Left ventricle myocardium superior (tissue), 1 donor: ENCODE measurements at regions of chr1 and their contacts with region 1.

Region 1: DNA sequence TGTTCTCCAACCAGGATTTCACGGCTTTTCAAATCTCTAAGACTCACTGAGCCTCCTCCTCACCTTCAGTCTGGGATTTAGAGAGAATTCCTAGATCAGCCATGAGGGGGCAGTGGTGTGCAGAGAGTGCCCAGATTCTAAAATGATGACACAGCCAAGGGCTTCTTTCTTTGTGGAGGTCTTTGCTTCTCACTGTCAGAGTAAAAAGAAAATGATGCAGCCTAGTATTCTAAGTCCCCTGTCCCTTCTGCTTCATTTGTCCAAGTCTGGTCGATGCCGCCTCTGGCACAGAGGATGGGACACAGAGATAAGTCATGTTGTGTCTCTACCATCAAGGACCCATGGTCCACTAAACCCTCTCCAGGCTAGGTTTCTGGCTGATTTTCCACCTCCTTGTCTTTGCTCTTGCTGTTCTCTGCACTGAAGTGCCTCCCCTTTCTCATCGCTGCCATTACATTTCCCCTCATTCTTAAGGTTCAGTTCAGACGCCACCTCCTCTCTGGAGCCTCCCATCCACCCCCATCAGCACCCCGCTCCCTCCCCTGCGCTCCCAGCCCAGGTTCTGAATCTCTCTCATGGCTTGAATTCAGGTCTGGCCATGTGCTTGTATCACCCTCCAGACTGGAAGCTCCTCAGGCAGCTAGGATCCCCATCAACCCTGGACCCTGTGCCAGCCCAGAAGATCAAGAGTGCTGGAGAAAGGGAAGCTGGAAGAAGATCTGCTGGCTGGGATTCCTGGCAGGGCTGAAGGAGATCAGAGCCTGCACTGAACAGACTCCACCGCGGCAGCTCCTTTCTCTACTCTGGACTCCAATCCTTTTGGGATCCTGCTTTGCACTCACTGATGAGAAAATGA is 12.0 kb upstream of the TINAGL1 start:
- DNase-seq: no peak
- ATAC-seq: peak; percentile 57

Region 2: DNA sequence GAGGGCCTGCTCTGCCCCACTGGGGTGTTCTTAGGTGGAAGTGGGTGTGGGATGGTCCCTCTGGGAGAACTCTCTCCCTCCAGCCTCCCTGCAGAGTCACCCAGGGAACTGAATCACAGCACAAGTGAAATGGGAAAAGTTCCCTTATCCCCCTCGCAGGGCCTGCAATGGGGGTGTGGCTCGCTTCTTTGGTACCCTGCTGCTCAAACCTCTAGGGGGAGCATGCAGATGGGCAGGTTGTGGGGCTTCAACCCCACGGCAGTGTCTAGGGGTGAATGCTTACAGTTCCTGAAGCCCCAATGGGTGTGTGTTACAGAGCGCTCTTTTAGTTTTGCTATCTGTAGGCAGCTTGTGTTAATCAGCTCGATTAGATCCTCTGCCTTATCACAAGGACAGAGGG is 47.1 kb before region 1 on chr1:
- intact Hi-C with region 1: no loop called
- DNase-seq: no peak
- ATAC-seq: no peak

Region 3: GRCh38 chr1:31595836-31596736 is 31.7 kb after region 1 on chr1:
- intact Hi-C with region 1: loop called (anchors 5 kb)
- DNase-seq: no peak
- ATAC-seq: no peak

Region 4: GRCh38 chr1:31617917-31618660 is 53.7 kb after region 1 on chr1:
- intact Hi-C with region 1: loop called (anchors 2 kb)
- DNase-seq: peak; percentile 66
- ATAC-seq: peak; percentile 63